Natural killer cell (primary cell): ENCODE measurements at regions of chr6 and their contacts with region 1.

Region 1: GRCh38 chr6:111764238-111765175 is 108.7 kb downstream of the FYN start:
- DNase-seq: peak; percentile 60 to 86
- ATAC-seq: peak; percentile 41 to 43 (median 41)
- H3K4me3 ChIP-seq: no peak overlapping the region
- H3K4me3 Mint-ChIP-seq: peak overlapping the region; percentile 95
- H3K27ac ChIP-seq: peak overlapping the region; percentile 99
- H3K27ac Mint-ChIP-seq: peak overlapping the region; percentile 99 to 100
- H3K4me1 ChIP-seq: peaks cover 82% of the 10 kb centered on the region
- H3K4me1 Mint-ChIP-seq: peaks cover 99 to 100% of the 10 kb centered on the region in 2 donors
- H3K27me3 ChIP-seq: no peaks in the 10 kb centered on the region
- H3K27me3 Mint-ChIP-seq: no peaks in the 10 kb centered on the region
- CTCF ChIP-seq: no peak

Region 2: DNA sequence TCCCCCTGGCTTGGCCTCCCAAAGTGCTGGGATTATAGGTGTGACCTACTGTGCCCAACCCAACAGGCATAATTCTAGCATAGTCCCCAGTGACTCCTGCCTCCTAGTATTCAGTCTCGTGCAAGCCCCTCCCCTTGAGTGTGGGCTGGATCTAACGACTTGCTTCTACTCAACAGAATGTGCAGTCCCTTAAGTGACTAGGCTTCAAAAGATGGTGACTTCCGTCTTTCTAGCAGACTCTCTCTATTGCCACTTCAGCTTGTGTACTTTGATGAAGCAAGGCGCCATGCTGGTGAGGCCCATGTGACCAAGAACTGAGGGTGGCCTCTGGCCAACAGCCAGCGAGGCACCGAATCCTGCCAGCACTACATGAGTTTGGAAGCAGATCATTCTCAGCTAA is 49.2 kb before region 1 on chr6:
- intact Hi-C with region 1: loop called (anchors 2 kb)
- DNase-seq: peak in 1 of 2 donors; percentile 75
- ATAC-seq: peak in 2 of 3 donors; percentile 19 to 25
- H3K4me3 ChIP-seq: no peak overlapping the region
- H3K4me3 Mint-ChIP-seq: peak overlapping the region; percentile 79
- H3K27ac ChIP-seq: peak overlapping the region; percentile 82
- H3K27ac Mint-ChIP-seq: peak overlapping the region; percentile 98 to 100
- H3K4me1 ChIP-seq: peaks cover 44% of the 10 kb centered on the region
- H3K4me1 Mint-ChIP-seq: peaks cover 74 to 76% of the 10 kb centered on the region in 2 donors
- H3K27me3 ChIP-seq: no peaks in the 10 kb centered on the region
- H3K27me3 Mint-ChIP-seq: no peaks in the 10 kb centered on the region
- CTCF ChIP-seq: no peak

Region 3: DNA sequence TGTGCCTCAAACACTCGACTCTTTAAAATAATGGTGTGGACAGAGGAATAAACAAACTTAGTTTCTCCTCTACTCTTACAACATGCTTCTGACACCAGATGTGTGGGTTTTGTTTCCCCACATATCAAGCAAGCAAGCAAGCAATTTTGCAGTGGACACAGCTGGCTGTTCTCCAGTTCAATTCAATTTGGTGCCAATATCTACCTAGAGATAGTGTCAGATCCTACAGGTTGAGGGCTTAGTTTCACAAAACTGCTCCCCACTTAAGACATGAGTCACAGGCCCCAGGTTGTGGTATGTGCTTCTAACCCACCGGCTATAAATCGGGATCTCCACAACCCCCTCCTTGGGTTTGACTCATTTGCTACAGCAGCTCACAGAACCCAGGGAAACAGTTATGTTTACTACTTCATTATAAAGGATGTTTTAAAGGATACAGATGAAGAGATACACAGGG is 27.4 kb before region 1 on chr6:
- intact Hi-C with region 1: loop called (anchors 2 kb)
- DNase-seq: peak in 1 of 2 donors; percentile 57
- ATAC-seq: peak; percentile 28 to 41 (median 36)
- H3K4me3 ChIP-seq: no peak overlapping the region
- H3K4me3 Mint-ChIP-seq: peak overlapping the region; percentile 43
- H3K27ac ChIP-seq: peak overlapping the region; percentile 84
- H3K27ac Mint-ChIP-seq: peak overlapping the region; percentile 90 to 100
- H3K4me1 ChIP-seq: peaks cover 93% of the 10 kb centered on the region
- H3K4me1 Mint-ChIP-seq: peaks cover 97% of the 10 kb centered on the region in 2 donors
- H3K27me3 ChIP-seq: no peaks in the 10 kb centered on the region
- H3K27me3 Mint-ChIP-seq: no peaks in the 10 kb centered on the region
- CTCF ChIP-seq: no peak

Region 4: GRCh38 chr6:111750753-111751684 is 13.5 kb before region 1 on chr6:
- intact Hi-C with region 1: loop called (anchors 1 kb)
- DNase-seq: peak; percentile 53 to 92
- ATAC-seq: peak; percentile 70 to 83 (median 80)
- H3K4me3 ChIP-seq: no peak overlapping the region
- H3K4me3 Mint-ChIP-seq: peak overlapping the region; percentile 86
- H3K27ac ChIP-seq: peak overlapping the region; percentile 99
- H3K27ac Mint-ChIP-seq: peak overlapping the region; percentile 92 to 100
- H3K4me1 ChIP-seq: peaks cover 57% of the 10 kb centered on the region
- H3K4me1 Mint-ChIP-seq: peaks cover 95 to 96% of the 10 kb centered on the region in 2 donors
- H3K27me3 ChIP-seq: no peaks in the 10 kb centered on the region
- H3K27me3 Mint-ChIP-seq: no peaks in the 10 kb centered on the region
- CTCF ChIP-seq: no peak

Region 5: GRCh38 chr6:111777357-111777756 is 12.8 kb after region 1 on chr6:
- intact Hi-C with region 1: loop called (anchors 1 kb)
- DNase-seq: peak in 1 of 2 donors; percentile 78
- ATAC-seq: peak; percentile 61 to 77 (median 70)
- H3K4me3 ChIP-seq: no peak overlapping the region
- H3K4me3 Mint-ChIP-seq: peak overlapping the region; percentile 68
- H3K27ac ChIP-seq: peak overlapping the region; percentile 67
- H3K27ac Mint-ChIP-seq: peak overlapping the region; percentile 99 to 100
- H3K4me1 ChIP-seq: peaks cover 68% of the 10 kb centered on the region
- H3K4me1 Mint-ChIP-seq: peaks cover 88 to 90% of the 10 kb centered on the region in 2 donors
- H3K27me3 ChIP-seq: no peaks in the 10 kb centered on the region
- H3K27me3 Mint-ChIP-seq: no peaks in the 10 kb centered on the region
- CTCF ChIP-seq: peak; percentile 30